Esophagus squamous epithelium (tissue), 5 donors: ENCODE measurements at regions of chr15 and their contacts with region 1.

Region 1: DNA sequence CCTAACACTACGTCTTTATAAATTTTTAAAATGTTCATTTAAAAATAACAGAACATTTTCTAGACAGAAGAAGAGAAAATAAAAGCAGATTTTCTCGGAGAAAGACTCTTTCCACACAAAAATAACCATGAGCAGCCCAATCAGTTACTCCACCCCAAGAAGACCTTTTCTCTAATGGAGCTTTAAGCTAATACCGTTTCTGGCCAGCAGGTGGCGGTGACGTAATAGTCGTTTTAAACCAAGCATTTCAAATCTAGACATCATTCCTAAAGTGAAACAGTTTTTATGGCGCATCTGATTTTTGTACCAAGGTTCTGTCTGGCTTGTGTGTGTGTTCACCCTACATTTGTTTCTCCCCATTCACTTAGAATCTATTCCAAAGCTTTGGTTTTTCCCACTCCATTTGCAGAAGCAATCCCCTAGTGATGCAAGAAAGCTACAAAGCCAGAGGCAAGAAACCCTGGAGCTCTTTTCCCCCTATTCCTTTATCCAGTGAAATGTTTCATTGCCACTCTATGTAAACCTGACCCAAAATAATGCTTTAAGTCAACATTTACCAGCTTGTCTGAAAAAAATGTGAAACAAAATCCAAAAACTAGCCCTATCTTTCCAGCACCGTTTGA is 336.7 kb upstream of the IGF1R start:
- DNase-seq: no peak
- H3K4me3 ChIP-seq: no peak overlapping the region
- H3K27ac ChIP-seq: no peak overlapping the region
- H3K4me1 ChIP-seq: peaks cover 0 to 5% (median 0%) of the 10 kb centered on the region in 3 donors
- H3K27me3 ChIP-seq: no peaks in the 10 kb centered on the region
- CTCF ChIP-seq: peak; percentile 55 to 90 (median 83)
- POLR2A ChIP-seq: no peak

Region 2: DNA sequence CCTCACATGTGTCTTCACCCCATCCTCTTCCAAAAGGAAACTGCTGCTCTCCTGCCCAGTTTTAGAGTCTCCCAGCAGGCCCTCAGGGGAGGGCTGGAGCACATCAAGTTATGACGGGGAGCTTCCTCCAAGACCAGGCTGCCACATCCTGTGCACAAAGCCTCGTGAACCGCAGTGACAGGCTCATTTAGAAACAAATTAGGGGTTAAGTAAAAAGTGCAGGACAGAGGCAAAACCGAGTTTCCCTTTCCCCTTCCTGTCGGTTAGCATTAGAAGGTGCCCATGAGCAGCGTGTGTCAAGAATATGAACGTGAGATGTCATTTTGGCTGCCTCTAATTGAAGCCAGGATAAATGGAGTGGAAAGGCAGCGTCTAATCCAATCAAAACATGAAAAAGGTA is 151.4 kb before region 1 on chr15:
- intact Hi-C with region 1: no loop called
- DNase-seq: no peak
- H3K4me3 ChIP-seq: no peak overlapping the region
- H3K27ac ChIP-seq: no peak overlapping the region
- H3K4me1 ChIP-seq: no peaks in the 10 kb centered on the region
- H3K27me3 ChIP-seq: peaks cover 0 to 3% (median 0%) of the 10 kb centered on the region in 4 donors
- CTCF ChIP-seq: no peak
- POLR2A ChIP-seq: no peak

Region 3: GRCh38 chr15:98177924-98178592 is 133.6 kb before region 1 on chr15:
- intact Hi-C with region 1: no loop called
- DNase-seq: no peak
- H3K4me3 ChIP-seq: no peak overlapping the region
- H3K27ac ChIP-seq: no peak overlapping the region
- H3K4me1 ChIP-seq: no peaks in the 10 kb centered on the region
- H3K27me3 ChIP-seq: peaks cover 0 to 43% (median 0%) of the 10 kb centered on the region in 4 donors
- CTCF ChIP-seq: peak; percentile 27 to 84 (median 66)
- POLR2A ChIP-seq: no peak

Region 4: GRCh38 chr15:98369081-98369716 is 57.5 kb after region 1 on chr15:
- intact Hi-C with region 1: no loop called
- DNase-seq: no peak
- H3K4me3 ChIP-seq: no peak overlapping the region
- H3K27ac ChIP-seq: peak overlapping the region in 2 of 4 donors; percentile 29 to 39
- H3K4me1 ChIP-seq: no peaks in the 10 kb centered on the region
- H3K27me3 ChIP-seq: no peaks in the 10 kb centered on the region
- CTCF ChIP-seq: no peak
- POLR2A ChIP-seq: no peak

Region 5: DNA sequence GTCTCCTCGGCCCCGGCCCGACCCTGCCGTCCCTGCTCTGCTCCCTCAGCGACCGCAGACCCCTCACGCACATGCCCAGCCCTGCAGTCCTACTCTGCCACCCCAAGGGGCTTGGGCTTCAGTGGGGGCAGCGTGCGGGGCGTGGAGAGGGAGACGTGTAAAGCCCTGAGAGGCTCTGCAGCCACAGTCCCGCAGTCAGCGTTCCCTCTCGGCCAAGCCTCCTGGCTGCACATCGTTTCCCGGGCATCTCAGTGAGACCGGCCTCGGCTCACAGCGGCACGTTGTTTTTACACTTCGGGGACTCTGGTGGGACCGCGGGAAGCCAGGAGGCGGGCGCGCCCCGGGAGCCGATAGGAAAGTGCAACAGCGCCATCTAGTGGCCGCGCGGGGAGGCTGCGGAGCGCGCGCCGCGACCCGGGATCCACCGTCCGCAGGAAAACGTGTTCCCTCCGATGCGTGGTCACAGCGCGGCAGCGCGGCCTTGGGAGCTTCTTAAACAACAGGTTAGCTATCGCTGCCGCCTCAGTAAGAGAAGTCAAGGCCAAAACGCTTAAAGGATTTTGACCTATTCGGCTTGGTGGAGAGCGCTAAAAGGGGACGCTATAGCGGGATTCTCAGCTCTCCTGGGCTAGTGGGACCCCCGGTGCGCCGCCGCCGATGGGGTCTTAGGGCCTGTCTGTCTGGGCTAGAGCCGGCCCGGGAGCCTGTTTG is 109.9 kb after region 1 on chr15:
- intact Hi-C with region 1: loop called (anchors 5 kb)
- DNase-seq: no peak
- H3K4me3 ChIP-seq: peak overlapping the region in 3 of 4 donors; percentile 24 to 51 (median 33)
- H3K27ac ChIP-seq: no peak overlapping the region
- H3K4me1 ChIP-seq: peaks cover 9 to 22% (median 13%) of the 10 kb centered on the region in 3 donors
- H3K27me3 ChIP-seq: peaks cover 0 to 56% (median 6%) of the 10 kb centered on the region in 4 donors
- CTCF ChIP-seq: peak; percentile 88 to 99 (median 97)
- POLR2A ChIP-seq: no peak

Region 6: DNA sequence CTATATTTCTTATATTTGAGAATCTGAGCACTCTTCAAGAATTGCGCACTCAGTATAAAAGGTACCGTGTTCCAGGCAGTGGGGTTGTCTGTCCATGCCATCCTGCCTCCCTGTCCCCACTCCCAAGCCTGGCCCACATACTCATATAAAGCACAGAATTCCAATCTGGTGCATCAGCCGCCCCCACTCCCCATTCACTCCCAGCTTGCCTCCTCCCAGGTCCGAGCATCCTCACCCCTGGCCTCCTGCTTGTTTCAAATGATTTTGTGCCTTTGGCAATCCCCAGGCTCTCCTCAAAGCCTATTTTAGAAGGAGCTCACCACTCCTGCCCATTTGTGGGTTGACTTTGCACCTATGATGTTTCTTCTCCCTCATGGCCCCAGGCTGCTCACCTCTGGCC is 314.5 kb after region 1 on chr15:
- intact Hi-C with region 1: no loop called
- DNase-seq: no peak
- H3K4me3 ChIP-seq: no peak overlapping the region
- H3K27ac ChIP-seq: no peak overlapping the region
- H3K4me1 ChIP-seq: no peaks in the 10 kb centered on the region
- H3K27me3 ChIP-seq: peaks cover 0 to 76% (median 4%) of the 10 kb centered on the region in 4 donors
- CTCF ChIP-seq: no peak
- POLR2A ChIP-seq: no peak